Common myeloid progenitor, CD34-positive (primary cell): ENCODE measurements at regions of chr3 and their contacts with region 1.

Region 1: GRCh38 chr3:4584456-4585249 is 91.5 kb downstream of the ITPR1 start:
- DNase-seq: peak; percentile 63 to 82 (median 80)
- H3K4me3 ChIP-seq: peak overlapping the region in 6 of 7 experiments; percentile 30 to 78 (median 61)
- H3K27ac ChIP-seq: peak overlapping the region; percentile 29 to 82
- H3K4me1 ChIP-seq: peaks cover 0 to 84% (median 60%) of the 10 kb centered on the region in 4 experiments
- H3K27me3 ChIP-seq: no peaks in the 10 kb centered on the region

Region 2: DNA sequence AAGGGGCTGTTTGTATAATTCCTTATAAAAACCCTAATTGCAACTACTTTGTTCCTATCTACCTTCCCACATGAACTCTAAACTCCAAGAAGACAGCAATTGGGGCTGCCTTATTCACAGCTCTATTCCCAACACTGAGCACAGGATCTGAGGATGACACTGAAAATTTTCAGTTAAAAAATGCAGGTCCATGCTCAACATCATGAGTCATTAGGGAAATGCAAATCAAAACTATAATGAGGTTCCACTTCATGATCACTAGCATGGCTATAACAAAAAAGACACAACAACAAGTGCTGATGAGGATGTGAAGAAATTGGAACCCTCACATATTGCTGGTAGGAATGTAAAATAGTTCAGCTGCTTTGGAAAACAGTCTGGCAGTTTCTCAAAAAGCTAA is 130.5 kb before region 1 on chr3:
- CTCF ChIA-PET with region 1: no interaction called
- POLR2A ChIA-PET with region 1: no interaction called
- DNase-seq: no peak
- H3K4me3 ChIP-seq: no peak overlapping the region
- H3K27ac ChIP-seq: no peak overlapping the region
- H3K4me1 ChIP-seq: no peaks in the 10 kb centered on the region
- H3K27me3 ChIP-seq: no peaks in the 10 kb centered on the region

Region 3: GRCh38 chr3:4533489-4534443 is 50.9 kb before region 1 on chr3:
- CTCF ChIA-PET with region 1: interaction called, 13 read pairs
- POLR2A ChIA-PET with region 1: no interaction called
- DNase-seq: peak; percentile 93 to 99 (median 97)
- H3K4me3 ChIP-seq: peak overlapping the region in 5 of 7 experiments; percentile 16 to 57 (median 54)
- H3K27ac ChIP-seq: peak overlapping the region; percentile 69 to 83
- H3K4me1 ChIP-seq: peaks cover 20 to 74% (median 59%) of the 10 kb centered on the region in 4 experiments
- H3K27me3 ChIP-seq: no peaks in the 10 kb centered on the region

Region 4: DNA sequence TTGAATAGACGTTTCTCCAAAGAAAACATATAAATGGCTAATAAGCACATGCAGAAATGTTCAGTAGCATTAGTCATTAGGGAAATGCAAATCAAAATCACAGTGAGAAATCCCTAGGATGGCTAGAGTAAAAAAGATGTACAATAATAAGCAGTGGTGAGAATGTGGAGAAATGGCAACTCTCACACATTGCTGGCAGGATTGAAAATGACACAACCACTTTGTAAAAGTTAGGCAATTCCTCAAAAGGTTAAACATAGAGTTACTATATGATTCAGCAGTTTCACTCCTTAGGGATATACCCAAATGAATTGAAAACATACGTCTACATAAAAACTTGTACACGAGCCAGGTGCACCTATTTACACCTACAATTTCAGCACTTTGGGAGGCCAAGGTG is 17.2 kb after region 1 on chr3:
- CTCF ChIA-PET with region 1: interaction called, 10 read pairs
- POLR2A ChIA-PET with region 1: no interaction called
- DNase-seq: no peak
- H3K4me3 ChIP-seq: no peak overlapping the region
- H3K27ac ChIP-seq: no peak overlapping the region
- H3K4me1 ChIP-seq: peaks cover 2 to 7% (median 4%) of the 10 kb centered on the region in 4 experiments
- H3K27me3 ChIP-seq: no peaks in the 10 kb centered on the region

Region 5: DNA sequence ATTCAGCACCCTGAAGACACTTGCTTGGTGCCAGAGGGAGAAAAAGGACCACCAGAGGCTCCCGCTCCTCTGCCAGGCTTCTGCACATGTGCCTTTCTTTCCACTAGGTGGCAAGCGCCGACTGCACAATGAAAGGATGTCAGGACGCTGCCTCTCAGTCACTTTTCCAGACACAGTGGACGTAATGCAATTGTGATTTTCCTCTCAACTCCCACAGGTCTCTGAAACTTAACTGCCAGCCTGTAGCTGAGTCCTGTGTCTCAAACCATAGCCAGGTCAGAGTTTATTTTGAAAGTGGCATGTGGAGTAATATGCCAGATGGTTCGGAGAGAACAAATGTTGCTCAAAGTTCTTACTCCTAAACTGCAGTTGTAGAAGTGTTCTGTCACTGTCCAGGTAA is 71.4 kb after region 1 on chr3:
- CTCF ChIA-PET with region 1: no interaction called
- POLR2A ChIA-PET with region 1: no interaction called
- DNase-seq: peak; percentile 25 to 52 (median 37)
- H3K4me3 ChIP-seq: no peak overlapping the region
- H3K27ac ChIP-seq: no peak overlapping the region
- H3K4me1 ChIP-seq: no peaks in the 10 kb centered on the region
- H3K27me3 ChIP-seq: no peaks in the 10 kb centered on the region

Region 6: DNA sequence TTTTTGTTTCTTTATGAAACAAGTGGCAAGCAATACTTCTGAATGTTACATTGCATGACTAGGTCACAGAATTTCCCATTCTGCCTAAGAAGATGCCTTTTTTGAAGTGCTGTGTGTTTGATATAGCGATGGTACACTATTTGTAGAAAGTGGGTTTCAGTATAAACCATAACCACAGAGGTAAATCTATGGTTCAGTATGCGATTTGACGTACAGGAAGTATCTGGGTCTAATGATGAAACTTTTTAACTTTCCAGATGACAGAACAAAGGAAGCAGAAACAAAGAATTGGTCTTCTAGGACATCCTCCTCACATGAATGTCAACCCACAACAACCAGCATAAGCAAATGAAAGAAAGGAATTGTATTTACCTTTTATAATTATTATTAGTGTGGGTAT is 261.2 kb after region 1 on chr3:
- CTCF ChIA-PET with region 1: no interaction called
- POLR2A ChIA-PET with region 1: no interaction called
- DNase-seq: peak; percentile 83 to 90 (median 87)
- H3K4me3 ChIP-seq: no peak overlapping the region
- H3K27ac ChIP-seq: peak overlapping the region in 1 of 2 experiments; percentile 12
- H3K4me1 ChIP-seq: peaks cover 23 to 43% (median 28%) of the 10 kb centered on the region in 4 experiments
- H3K27me3 ChIP-seq: no peaks in the 10 kb centered on the region